Lower leg skin (tissue), 4 donors: ENCODE measurements at regions of chr6 and their contacts with region 1.

Region 1: GRCh38 chr6:136643850-136644596 is 93.8 kb upstream of the MAP7 start:
- DNase-seq: peak; percentile 88 to 96
- H3K4me3 ChIP-seq: no peak overlapping the region
- CTCF ChIP-seq: no peak
- POLR2A ChIP-seq: no peak

Region 2: GRCh38 chr6:136526196-136526930 is 117.7 kb before region 1 on chr6:
- intact Hi-C with region 1: no loop called
- DNase-seq: peak; percentile 34 to 87
- H3K4me3 ChIP-seq: no peak overlapping the region
- CTCF ChIP-seq: no peak
- POLR2A ChIP-seq: no peak

Region 3: DNA sequence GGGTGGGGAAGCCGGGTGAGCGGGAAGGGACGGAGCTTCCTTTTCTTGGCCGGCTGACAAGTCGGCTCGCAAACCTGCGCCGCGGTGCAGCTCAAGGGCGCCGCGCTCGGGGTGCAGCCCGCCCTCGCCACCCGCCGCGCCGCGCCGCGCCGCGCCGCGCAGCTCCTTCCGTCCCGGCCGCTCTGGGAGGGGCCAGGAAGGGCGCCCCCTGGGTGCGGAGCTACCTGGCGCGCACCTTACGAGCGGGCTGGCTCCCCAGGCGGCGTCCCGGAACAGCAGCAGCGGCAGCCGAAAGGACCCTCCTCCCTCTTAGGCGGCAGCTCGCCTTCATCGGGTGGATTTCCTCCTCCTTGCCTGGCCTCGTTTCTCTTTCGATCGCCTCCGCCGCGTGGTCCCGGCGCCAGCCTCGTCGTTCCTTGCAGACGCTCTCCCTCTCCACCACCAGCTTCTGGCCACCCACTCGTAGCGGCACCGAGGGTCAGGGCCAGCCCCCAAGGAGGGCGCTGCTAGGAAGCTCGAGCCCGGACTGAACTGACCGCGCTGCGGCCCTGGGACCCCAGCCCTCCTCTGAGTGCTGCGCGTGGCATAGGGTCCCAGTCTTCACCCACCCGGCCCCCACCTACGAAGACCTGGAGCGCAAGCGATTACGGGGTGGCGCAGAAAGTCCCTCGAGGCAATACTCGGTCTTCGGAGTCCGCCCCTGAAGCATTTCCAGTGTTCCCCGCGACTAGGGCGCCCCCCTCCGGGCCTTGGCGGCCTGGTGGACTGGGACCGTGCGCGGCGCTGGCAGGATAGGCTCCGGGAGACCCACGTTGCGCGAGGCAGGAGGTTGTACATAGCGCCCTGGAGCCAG is 148.6 kb after region 1 on chr6 and contains the start of gene MAP3K5:
- intact Hi-C with region 1: loop called (anchors 5 kb)
- DNase-seq: peak; percentile 88 to 99
- H3K4me3 ChIP-seq: peak within 1 kb of the TSS; percentile 81
- CTCF ChIP-seq: no peak
- POLR2A ChIP-seq: no peak
- total RNA-seq, gene MAP3K5: 18.9 to 35.2 (median 27.0) TPM

Region 4: DNA sequence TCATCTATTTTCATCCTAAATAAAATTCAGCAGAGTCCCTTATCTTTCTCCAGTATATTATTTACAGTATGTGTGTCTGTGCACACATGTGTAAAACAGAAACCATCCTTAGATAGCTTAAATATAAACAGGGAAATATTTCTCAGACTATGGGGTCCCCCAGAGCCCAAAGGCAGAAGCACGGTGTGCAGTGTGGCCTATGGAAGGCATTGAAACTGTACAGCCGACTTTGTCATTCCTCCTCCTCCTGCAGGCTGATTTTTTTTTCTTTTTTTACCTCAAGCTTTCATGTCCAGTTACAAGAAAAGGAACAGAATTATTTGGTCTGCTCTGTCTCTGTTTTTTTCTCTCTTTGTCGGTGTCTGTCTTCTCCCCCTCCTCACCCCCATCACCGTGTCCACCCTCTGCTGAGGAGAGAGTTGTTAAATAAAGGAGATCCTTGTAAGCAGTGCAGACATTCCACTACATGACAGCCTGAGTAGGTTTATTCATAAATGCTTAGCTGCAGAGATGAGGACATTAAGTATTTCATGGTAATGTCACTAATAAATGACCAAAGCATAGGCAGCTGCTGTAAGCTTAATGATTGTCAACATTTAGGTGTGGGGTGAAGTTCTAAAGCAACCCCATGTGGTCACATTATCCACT is 246.3 kb after region 1 on chr6:
- intact Hi-C with region 1: no loop called
- DNase-seq: no peak
- H3K4me3 ChIP-seq: no peak overlapping the region
- CTCF ChIP-seq: no peak
- POLR2A ChIP-seq: no peak

Region 5: GRCh38 chr6:137136065-137136464 is 492.0 kb after region 1 on chr6:
- intact Hi-C with region 1: no loop called
- DNase-seq: no peak
- H3K4me3 ChIP-seq: no peak overlapping the region
- CTCF ChIP-seq: no peak
- POLR2A ChIP-seq: no peak